ENCODE measurements at regions of chr12 and their contacts with region 1.

Region 1: GRCh38 chr12:132908145-132909044 is 21.0 kb upstream of the CHFR start:
- DNase-seq: peak; percentile 99
- H3K4me3 Mint-ChIP-seq: peak overlapping the region; percentile 86
- H3K27ac Mint-ChIP-seq: peak overlapping the region; percentile 92
- H3K4me1 Mint-ChIP-seq: peaks cover 17% of the 10 kb centered on the region
- H3K27me3 Mint-ChIP-seq: peaks cover 4% of the 10 kb centered on the region

Region 2: DNA sequence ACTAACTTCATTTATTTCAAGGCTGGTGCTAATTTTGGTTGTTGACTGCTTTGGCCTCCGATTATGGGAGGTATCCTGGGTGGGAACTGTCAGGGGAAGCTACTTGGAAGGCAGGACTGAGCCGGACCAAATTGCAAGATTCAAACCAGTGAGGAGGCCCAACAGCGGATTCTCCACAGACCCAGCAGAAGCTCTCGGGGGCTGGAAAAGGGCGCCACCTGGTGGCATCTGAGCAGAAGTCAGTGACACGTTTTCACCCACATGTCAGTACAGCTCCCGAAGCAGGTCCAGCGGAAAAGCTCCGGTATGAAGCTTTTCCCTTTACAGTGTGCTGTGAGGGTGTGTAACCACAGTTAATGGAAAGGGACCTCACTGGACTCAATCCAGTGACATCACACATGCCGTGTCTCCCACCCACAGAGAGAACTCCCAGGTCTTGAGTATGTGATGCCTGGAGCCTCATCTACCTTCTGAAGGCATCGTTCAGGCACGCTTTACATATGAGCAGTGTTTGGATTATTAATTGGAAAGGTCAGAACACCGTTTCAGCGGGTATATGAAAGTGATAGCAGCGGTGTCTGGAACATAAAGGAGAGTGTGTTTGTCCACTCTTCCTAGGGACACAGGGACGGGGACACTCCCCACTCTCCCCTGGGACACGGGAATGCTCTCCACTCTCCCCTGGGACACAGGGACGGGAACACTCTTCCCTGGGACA is 293.4 kb before region 1 on chr12:
- CTCF ChIA-PET with region 1: no interaction called
- POLR2A ChIA-PET with region 1: no interaction called
- intact Hi-C with region 1: no loop called
- DNase-seq: peak; percentile 86
- H3K4me3 Mint-ChIP-seq: no peak overlapping the region
- H3K27ac Mint-ChIP-seq: no peak overlapping the region
- H3K4me1 Mint-ChIP-seq: peaks cover 14% of the 10 kb centered on the region
- H3K27me3 Mint-ChIP-seq: peaks cover 35% of the 10 kb centered on the region

Region 3: DNA sequence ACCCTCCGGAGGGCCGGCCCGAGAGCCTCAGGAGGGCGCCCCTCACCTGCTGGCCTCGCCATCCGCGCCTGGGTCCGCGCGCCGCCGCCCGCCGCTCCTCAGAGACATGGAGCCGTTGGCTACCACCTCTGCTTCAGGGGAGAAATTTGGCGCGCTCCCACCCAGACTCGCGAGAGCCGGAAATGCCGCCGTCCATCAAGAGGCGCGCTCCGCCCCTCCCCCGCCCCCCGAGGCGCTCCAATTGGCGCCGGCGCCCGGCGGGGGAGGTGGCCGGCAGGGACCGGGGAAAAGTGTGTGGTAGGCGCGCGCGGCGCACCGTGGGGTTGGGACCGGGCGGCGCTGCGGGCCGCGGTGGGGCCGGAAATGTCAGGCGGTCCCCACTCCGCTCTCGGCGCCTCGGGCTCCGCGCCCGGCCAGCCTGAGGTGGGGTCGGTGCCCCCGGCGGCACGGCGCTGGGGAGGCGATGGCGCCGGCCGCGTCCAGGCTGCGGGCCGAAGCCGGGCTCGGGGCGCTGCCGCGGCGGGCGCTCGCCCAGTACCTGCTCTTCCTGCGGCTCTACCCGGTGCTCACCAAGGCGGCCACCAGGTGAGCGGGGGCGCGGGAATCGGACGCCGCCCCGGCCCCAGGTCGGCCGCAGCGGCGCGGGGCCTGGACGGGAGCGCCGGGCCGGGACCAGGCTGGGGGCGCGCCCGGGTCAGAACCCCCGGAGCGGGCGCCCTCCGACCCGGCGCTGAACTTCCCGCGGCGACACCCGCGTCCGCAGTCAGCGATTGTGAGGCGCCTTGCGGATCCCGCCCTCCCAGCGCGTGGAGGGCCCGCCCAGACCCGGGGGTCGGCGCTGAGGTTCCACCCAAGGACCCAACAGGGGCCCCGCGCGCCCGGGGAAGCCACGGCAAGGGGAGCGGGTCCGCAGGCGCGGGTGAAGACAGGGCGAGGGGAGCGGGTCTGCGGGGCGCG is 220.9 kb before region 1 on chr12 and contains the starts of genes POLE and PXMP2:
- CTCF ChIA-PET with region 1: no interaction called
- POLR2A ChIA-PET with region 1: no interaction called
- intact Hi-C with region 1: loop called (anchors 1 kb)
- DNase-seq: peak; percentile 96
- H3K4me3 Mint-ChIP-seq: peak within 1 kb of the TSS; percentile 77
- H3K27ac Mint-ChIP-seq: peak within 1 kb of the TSS; percentile 38
- H3K4me1 Mint-ChIP-seq: peaks cover 18% of the 10 kb centered on the region
- H3K27me3 Mint-ChIP-seq: no peaks in the 10 kb centered on the region
- total RNA-seq, gene POLE: 112 to 114 TPM
- total RNA-seq, gene PXMP2: 17.8 to 20.9 TPM

Region 4: GRCh38 chr12:132700212-132700822 is 208.1 kb before region 1 on chr12:
- CTCF ChIA-PET with region 1: no interaction called
- POLR2A ChIA-PET with region 1: no interaction called
- intact Hi-C with region 1: no loop called
- DNase-seq: no peak
- H3K4me3 Mint-ChIP-seq: no peak overlapping the region
- H3K27ac Mint-ChIP-seq: no peak overlapping the region
- H3K4me1 Mint-ChIP-seq: peaks cover 2% of the 10 kb centered on the region
- H3K27me3 Mint-ChIP-seq: no peaks in the 10 kb centered on the region

Region 5: DNA sequence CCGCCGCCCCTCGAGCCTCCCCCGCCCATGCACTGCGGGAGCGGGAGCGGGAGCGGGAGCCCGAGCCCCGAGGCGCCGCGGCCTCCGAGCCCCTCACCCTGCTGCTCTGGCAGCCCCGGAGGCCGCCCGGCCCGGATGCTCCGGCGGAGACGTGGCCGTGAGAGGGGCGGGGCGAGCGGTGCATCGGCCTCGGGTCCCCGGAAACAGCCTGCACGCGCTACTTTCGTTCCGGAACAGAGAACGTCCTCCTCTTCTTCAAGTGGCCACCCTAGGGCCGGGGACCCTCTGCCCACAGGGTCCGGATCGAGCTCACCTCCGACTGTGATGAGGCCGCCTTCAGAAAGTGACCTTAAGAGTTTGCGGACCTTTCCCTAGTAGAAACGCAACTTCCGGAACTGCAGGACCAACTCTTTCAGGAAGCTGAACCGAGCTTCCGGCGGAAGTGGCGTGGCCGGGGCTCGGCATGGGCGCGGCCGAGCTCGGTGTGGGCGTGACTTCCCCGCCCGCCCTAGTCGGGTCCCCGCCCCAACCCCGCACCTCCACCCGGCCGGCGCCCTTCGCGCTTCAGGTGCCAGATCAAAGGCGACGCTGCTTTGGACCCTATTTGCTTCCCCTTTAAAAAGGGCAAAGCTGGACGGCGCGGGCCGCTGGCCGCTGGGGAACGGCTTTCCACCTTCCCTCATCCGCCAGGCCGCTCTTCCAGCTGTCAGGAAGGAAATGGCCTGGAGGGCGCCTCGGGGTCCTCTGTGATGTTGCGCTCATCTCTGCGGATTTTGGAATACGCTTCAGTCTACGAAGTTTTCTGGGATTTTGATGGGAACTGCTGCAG is 79.5 kb before region 1 on chr12 and contains the start of gene GOLGA3:
- CTCF ChIA-PET with region 1: interaction called, 13 read pairs
- POLR2A ChIA-PET with region 1: no interaction called
- intact Hi-C with region 1: loop called (anchors 2 kb)
- DNase-seq: peak; percentile 96
- H3K4me3 Mint-ChIP-seq: peak within 1 kb of the TSS; percentile 96
- H3K27ac Mint-ChIP-seq: peak within 1 kb of the TSS; percentile 100
- H3K4me1 Mint-ChIP-seq: peaks cover 50% of the 10 kb centered on the region
- H3K27me3 Mint-ChIP-seq: no peaks in the 10 kb centered on the region
- total RNA-seq, gene GOLGA3: 41.7 to 44.2 TPM

Region 6: DNA sequence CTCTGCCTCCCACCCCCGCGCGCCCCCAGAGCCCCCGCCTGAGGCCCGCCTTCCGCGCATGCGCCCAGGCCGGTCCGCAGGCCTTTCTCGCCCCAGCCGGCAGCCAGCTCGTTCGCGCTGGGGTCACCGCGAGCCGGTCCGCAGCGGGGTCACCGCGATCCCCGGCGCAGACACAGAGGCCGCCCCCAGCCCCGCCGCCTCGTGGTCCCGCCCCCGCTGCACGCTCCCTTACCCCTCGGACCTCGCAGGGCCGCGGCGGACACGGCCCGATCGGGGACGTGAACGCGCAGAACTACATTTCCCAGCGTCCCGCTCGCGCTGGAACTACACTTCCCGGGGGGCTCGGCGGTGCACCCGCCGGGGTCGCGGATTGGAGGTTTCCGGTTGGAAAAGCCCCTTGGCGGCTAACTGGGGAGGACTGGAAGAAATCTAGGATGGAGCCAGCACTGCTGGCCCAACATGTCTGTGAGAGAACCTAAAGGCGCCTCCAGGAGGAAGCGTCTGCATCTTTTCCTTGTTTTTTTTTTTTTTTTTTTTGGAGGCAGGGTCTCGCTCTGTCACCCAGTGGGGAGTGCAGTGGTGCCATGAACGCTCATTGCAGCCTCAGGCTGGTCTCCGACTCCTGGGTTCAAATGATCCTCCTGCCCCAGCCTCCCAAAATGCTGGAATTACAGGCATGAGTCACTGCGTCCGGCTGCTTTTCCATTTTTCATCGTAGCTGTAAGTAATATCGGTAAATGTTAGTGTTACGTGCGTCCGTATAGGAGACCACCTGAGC is 47.8 kb after region 1 on chr12 and contains the start of gene ZNF605:
- CTCF ChIA-PET with region 1: no interaction called
- POLR2A ChIA-PET with region 1: no interaction called
- intact Hi-C with region 1: loop called (anchors 1 kb)
- DNase-seq: peak; percentile 93
- H3K4me3 Mint-ChIP-seq: peak within 1 kb of the TSS; percentile 88
- H3K27ac Mint-ChIP-seq: peak within 1 kb of the TSS; percentile 89
- H3K4me1 Mint-ChIP-seq: peaks cover 31% of the 10 kb centered on the region
- H3K27me3 Mint-ChIP-seq: no peaks in the 10 kb centered on the region
- total RNA-seq, gene ZNF605: 4.6 to 5.3 TPM

Region 7: DNA sequence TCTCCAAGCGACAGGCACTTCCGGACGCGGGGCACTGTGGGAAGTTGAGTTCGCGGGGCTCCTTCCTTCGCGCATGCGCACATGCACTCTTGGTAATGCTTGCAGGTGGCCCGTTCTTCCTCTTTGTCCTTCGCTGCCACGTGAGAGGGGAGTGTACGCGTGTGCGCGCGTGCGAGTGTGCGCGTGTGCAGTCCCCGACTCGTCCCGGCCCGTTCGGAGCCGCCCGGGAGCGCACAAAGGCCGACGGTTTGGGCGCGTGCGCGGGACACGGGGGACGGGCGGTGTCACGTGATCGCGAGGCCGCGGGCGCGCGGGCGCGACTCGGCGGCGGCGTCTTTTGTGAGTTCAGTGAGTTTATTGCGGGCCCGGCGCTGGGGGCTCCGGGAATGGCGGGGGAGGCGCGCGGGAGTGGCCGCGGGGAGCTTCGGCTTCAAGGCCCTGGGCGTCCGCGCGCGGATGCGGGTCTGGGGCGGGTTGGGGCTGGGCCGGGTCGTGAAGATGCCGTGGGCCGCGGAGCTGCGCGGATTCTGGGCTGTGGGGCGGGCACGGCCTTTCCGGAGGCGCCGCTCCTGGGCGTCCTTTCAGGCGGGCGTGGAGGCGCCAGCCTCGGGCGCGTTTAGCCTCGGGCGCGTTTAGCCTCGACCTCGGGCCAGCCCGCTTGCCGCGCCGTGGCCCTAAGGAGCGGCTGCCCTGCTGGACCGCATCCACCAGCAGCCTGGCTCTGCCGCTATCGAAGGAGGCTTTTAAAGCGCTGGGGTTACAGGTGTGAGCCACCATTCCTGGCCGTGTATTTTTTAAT is 129.0 kb after region 1 on chr12 and contains the start of gene ZNF84:
- CTCF ChIA-PET with region 1: no interaction called
- POLR2A ChIA-PET with region 1: no interaction called
- intact Hi-C with region 1: loop called (anchors 1 kb)
- DNase-seq: peak; percentile 98
- H3K4me3 Mint-ChIP-seq: peak within 1 kb of the TSS; percentile 93
- H3K27ac Mint-ChIP-seq: peak within 1 kb of the TSS; percentile 93
- H3K4me1 Mint-ChIP-seq: peaks cover 7% of the 10 kb centered on the region
- H3K27me3 Mint-ChIP-seq: no peaks in the 10 kb centered on the region
- total RNA-seq, gene ZNF84: 10.1 to 11.8 TPM

Measured in activated CD4-positive, alpha-beta memory T cell treated with anti-CD3 and anti-CD28 coated beads for 36 hours (primary cell).